Activated naive CD4-positive, alpha-beta T cell treated with anti-CD3 and anti-CD28 coated beads for 36 hours (primary cell): ENCODE measurements at regions of chr4 and their contacts with region 1.

Region 1: GRCh38 chr4:3085948-3086655 is 11.6 kb downstream of the HTT start:
- DNase-seq: no peak
- H3K4me3 Mint-ChIP-seq: peak overlapping the region; percentile 23
- H3K27ac Mint-ChIP-seq: peak overlapping the region; percentile 86
- H3K4me1 Mint-ChIP-seq: peaks cover 69% of the 10 kb centered on the region
- H3K27me3 Mint-ChIP-seq: no peaks in the 10 kb centered on the region

Region 2: DNA sequence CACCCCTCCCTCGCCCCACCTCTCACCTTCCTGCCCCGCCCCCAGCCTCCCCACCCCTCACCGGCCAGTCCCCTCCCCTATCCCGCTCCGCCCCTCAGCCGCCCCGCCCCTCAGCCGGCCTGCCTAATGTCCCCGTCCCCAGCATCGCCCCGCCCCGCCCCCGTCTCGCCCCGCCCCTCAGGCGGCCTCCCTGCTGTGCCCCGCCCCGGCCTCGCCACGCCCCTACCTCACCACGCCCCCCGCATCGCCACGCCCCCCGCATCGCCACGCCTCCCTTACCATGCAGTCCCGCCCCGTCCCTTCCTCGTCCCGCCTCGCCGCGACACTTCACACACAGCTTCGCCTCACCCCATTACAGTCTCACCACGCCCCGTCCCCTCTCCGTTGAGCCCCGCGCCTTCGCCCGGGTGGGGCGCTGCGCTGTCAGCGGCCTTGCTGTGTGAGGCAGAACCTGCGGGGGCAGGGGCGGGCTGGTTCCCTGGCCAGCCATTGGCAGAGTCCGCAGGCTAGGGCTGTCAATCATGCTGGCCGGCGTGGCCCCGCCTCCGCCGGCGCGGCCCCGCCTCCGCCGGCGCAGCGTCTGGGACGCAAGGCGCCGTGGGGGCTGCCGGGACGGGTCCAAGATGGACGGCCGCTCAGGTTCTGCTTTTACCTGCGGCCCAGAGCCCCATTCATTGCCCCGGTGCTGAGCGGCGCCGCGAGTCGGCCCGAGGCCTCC is 11.9 kb before region 1 on chr4 and contains the starts of genes HTT and HTT-AS:
- CTCF ChIA-PET with region 1: interaction called, 3 read pairs
- intact Hi-C with region 1: loop called (anchors 1 kb)
- DNase-seq: peak; percentile 99
- H3K4me3 Mint-ChIP-seq: peak within 1 kb of the TSS; percentile 83
- H3K27ac Mint-ChIP-seq: peak within 1 kb of the TSS; percentile 87
- H3K4me1 Mint-ChIP-seq: peaks cover 27% of the 10 kb centered on the region
- H3K27me3 Mint-ChIP-seq: no peaks in the 10 kb centered on the region
- total RNA-seq, gene HTT: 91.6 to 94.1 TPM
- total RNA-seq, gene HTT-AS: not detected

Region 3: GRCh38 chr4:3136453-3136852 is 50.4 kb after region 1 on chr4:
- CTCF ChIA-PET with region 1: no interaction called
- intact Hi-C with region 1: no loop called
- DNase-seq: no peak
- H3K4me3 Mint-ChIP-seq: no peak overlapping the region
- H3K27ac Mint-ChIP-seq: no peak overlapping the region
- H3K4me1 Mint-ChIP-seq: no peaks in the 10 kb centered on the region
- H3K27me3 Mint-ChIP-seq: no peaks in the 10 kb centered on the region

Region 4: DNA sequence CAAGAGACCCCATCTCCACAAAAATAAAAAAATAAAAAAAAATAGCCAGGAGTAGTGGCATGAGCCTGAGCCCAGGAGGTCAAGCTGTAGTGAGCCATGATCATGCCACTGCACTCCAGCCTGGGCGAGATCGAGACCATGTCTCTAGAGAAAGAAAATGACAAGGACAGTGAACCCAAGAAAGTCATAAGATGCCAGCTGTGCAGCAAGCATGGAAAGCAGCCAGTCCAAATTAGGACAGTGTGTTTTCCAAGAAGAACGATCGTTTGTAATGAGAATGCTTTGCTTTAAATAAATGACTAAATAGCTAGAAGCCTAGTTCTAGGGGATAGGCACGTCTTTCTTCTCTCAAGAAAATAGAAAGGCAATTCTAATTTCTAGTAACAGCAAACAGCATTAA is 104.4 kb after region 1 on chr4:
- CTCF ChIA-PET with region 1: no interaction called
- intact Hi-C with region 1: no loop called
- DNase-seq: no peak
- H3K4me3 Mint-ChIP-seq: no peak overlapping the region
- H3K27ac Mint-ChIP-seq: no peak overlapping the region
- H3K4me1 Mint-ChIP-seq: peaks cover 26% of the 10 kb centered on the region
- H3K27me3 Mint-ChIP-seq: no peaks in the 10 kb centered on the region

Region 5: DNA sequence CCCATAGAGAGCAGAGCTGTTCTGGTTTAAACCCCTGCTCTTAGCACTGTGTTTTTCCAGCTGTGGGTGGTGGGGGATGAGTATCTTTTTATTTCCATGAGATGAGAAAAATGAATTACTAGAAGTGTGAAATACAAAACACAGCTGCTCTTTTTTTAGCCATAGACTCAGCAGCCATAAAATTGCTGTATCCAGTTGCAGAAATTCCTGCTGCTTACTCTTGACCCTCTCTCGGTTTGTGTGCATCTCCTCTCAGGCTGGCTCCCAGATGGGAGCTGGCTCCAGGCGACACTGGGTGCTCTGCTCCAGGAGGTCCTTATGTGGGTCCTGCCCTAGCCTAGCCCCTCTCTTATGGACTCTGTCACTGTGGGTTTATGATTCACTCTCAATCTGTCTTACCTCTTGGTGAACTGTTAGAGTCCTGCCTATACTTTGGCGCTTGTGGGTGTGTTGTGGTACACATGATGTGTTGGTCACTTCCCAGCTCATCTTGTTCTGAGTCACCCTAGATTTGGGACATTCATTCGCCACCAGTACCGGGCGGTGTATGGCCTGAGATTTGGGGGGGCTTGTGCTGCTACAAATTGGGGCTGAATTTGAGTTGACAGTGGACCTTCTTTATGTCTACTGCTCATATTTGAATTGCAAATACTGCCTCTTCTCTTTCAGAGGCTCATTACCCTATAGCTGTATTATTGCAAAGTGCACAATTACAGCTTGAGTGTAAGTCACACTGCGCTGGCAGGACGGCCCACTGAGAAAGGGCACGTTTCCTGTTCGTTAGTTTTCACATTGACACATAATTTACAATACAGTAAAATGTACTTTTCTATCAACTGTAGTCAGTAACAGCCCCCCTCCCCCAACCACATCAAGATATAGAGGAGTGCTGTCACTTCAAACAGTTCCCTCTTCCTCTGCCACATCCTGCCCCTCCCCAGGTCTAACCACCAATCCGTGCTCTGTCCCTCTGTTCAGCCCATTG is 115.9 kb after region 1 on chr4:
- CTCF ChIA-PET with region 1: no interaction called
- intact Hi-C with region 1: loop called (anchors 2 kb)
- DNase-seq: peak; percentile 88
- H3K4me3 Mint-ChIP-seq: peak overlapping the region; percentile 44
- H3K27ac Mint-ChIP-seq: peak overlapping the region; percentile 57
- H3K4me1 Mint-ChIP-seq: peaks cover 44% of the 10 kb centered on the region
- H3K27me3 Mint-ChIP-seq: no peaks in the 10 kb centered on the region